ENCODE measurements at regions of chr3 and their contacts with region 1.

Region 1: DNA sequence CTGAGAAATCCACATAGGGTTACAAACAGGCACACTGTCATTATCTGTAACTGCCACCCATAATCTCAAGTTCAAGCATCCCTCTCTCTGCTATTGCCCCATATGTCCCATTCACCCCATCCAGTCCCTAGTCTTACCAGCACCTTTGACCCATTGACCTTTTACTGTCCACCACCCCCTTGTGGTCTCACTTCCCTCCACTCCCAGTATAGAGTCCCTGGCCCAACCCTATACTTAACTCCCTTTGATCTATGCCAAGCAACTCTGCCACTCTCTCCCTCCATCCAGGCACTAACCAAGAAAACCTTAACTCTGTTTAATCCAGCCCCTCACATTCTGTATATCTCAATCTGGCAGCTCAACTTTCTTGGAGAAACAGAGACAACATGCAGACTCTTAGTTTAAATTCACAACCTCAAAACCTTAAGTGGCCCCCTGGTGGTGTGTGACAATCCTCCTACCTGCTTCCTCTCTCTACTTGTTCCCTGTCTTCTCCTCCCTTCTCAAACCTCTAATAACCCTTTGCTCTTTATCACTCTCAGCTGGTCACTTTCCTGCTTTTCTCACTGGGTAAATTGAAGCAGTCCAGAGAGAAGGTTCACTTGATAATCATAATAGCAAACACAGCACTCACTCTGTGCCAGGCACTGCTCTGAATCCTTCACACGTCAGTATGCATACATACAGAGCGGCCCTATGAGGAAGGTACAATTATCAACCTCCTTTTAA is 162.7 kb downstream of the STT3B start:
- DNase-seq: peak; percentile 52
- H3K4me3 Mint-ChIP-seq: no peak overlapping the region
- H3K27ac Mint-ChIP-seq: no peak overlapping the region
- H3K4me1 Mint-ChIP-seq: no peaks in the 10 kb centered on the region
- H3K27me3 Mint-ChIP-seq: no peaks in the 10 kb centered on the region

Region 2: GRCh38 chr3:30768703-30769685 is 926.5 kb before region 1 on chr3:
- CTCF ChIA-PET with region 1: no interaction called
- POLR2A ChIA-PET with region 1: no interaction called
- intact Hi-C with region 1: loop called (anchors 2 kb)
- DNase-seq: peak; percentile 81
- H3K4me3 Mint-ChIP-seq: no peak overlapping the region
- H3K27ac Mint-ChIP-seq: no peak overlapping the region
- H3K4me1 Mint-ChIP-seq: no peaks in the 10 kb centered on the region
- H3K27me3 Mint-ChIP-seq: peaks cover 7% of the 10 kb centered on the region

Region 3: GRCh38 chr3:31439890-31440750 is 255.3 kb before region 1 on chr3:
- CTCF ChIA-PET with region 1: no interaction called
- POLR2A ChIA-PET with region 1: no interaction called
- intact Hi-C with region 1: no loop called
- DNase-seq: no peak
- H3K4me3 Mint-ChIP-seq: no peak overlapping the region
- H3K27ac Mint-ChIP-seq: no peak overlapping the region
- H3K4me1 Mint-ChIP-seq: peaks cover 8% of the 10 kb centered on the region
- H3K27me3 Mint-ChIP-seq: no peaks in the 10 kb centered on the region

Region 4: GRCh38 chr3:31550452-31551251 is 144.8 kb before region 1 on chr3:
- CTCF ChIA-PET with region 1: interaction called, 3 read pairs
- POLR2A ChIA-PET with region 1: no interaction called
- intact Hi-C with region 1: loop called (anchors 1 kb)
- DNase-seq: no peak
- H3K4me3 Mint-ChIP-seq: no peak overlapping the region
- H3K27ac Mint-ChIP-seq: peak overlapping the region; percentile 33
- H3K4me1 Mint-ChIP-seq: peaks cover 74% of the 10 kb centered on the region
- H3K27me3 Mint-ChIP-seq: no peaks in the 10 kb centered on the region

Region 5: DNA sequence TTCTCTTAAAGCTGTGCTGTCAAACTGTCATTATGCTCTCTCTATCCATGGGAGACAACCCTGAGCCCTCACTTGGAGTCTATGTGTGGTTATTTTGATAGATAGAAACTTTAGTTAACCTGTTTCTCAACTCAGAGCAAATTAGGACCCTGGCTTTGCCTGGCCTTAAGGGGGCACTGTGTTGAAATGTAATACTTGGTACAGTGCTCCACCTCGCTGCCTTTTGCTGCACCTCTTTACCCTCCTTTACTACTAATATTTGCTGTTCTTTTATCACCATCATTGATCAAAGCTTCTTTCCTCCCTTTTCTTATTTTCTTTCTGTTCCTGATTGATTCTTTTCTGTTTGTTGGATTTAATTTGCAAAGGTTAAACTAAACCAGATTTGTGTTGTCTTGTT is 128.4 kb before region 1 on chr3:
- CTCF ChIA-PET with region 1: no interaction called
- POLR2A ChIA-PET with region 1: no interaction called
- intact Hi-C with region 1: loop called (anchors 5 kb)
- DNase-seq: peak; percentile 35
- H3K4me3 Mint-ChIP-seq: no peak overlapping the region
- H3K27ac Mint-ChIP-seq: no peak overlapping the region
- H3K4me1 Mint-ChIP-seq: peaks cover 84% of the 10 kb centered on the region
- H3K27me3 Mint-ChIP-seq: no peaks in the 10 kb centered on the region